Colonic mucosa (tissue), 4 donors: ENCODE measurements at regions of chrX and their contacts with region 1.

Region 1: DNA sequence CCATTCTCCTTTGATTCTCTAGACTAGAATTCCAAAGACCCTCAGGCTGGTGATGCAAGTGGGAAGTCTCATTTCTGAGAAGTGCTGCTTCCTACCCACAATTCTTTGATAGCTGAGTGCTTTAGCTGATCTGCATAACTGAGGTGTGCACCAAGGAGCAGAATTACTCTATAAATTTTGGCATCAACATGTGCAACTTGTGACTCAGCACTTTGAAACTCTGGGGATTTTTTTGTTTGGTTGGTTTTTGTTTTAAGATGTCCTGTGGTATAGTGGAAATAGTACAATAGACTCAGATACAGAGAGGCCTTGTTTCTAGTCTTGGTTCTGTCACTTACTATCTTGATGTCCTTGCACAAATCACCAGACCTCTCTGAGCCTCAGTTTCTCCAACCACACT is 148.4 kb downstream of the AR start:
- DNase-seq: no peak
- H3K4me3 ChIP-seq: no peak overlapping the region
- H3K27ac ChIP-seq: no peak overlapping the region
- H3K4me1 ChIP-seq: no peaks in the 10 kb centered on the region
- H3K27me3 ChIP-seq: no peaks in the 10 kb centered on the region
- CTCF ChIP-seq: no peak

Region 2: GRCh38 chrX:67555578-67556203 is 136.6 kb before region 1 on chrX:
- intact Hi-C with region 1: loop called (anchors 10 kb)
- DNase-seq: peak; percentile 30
- H3K4me3 ChIP-seq: no peak overlapping the region
- H3K27ac ChIP-seq: no peak overlapping the region
- H3K4me1 ChIP-seq: no peaks in the 10 kb centered on the region
- H3K27me3 ChIP-seq: no peaks in the 10 kb centered on the region
- CTCF ChIP-seq: peak; percentile 86